Endothelial cell of umbilical vein (primary cell): ENCODE measurements at regions of chr11 and their contacts with region 1.

Region 1: DNA sequence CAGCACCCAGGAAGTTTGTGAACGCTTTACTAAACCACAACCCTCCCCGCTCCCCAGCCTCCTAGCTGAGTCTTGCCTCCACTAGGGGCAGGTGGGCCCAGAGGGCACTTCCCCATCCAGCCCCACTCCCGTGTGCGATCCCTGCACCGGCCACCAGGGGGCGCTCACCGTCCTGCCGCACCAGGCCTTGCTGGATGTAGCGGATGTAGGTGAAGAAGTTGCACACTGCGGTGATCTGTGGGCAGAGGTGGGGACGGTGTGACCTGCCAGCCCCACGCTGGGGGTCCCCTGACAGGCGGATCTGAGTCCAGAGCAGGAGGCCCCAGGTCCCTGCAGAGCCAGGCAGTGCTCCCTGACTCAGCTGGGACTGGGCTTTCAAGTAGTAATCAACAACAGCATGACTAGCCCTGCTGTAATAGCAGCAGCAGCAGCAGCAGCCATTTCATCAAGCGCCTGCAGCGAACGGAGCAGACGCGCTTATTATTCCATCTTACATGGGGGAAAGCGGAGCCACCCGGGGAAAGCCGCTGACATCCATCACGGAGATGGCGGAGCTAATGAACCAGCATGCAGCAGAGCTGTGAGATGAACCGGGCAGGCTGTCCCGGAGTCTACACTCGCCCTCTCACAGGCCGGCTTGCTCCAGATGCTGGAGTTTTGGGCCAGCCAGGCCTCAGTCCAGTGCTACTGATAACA is 7.9 kb upstream of the FADS3 start:
- DNase-seq: peak; percentile 80
- H3K4me3 ChIP-seq: no peak overlapping the region
- H3K27ac ChIP-seq: no peak overlapping the region
- H3K4me1 ChIP-seq: no peaks in the 10 kb centered on the region
- H3K27me3 ChIP-seq: no peaks in the 10 kb centered on the region
- CTCF ChIP-seq: peak; percentile 100
- POLR2A ChIP-seq: no peak

Region 2: DNA sequence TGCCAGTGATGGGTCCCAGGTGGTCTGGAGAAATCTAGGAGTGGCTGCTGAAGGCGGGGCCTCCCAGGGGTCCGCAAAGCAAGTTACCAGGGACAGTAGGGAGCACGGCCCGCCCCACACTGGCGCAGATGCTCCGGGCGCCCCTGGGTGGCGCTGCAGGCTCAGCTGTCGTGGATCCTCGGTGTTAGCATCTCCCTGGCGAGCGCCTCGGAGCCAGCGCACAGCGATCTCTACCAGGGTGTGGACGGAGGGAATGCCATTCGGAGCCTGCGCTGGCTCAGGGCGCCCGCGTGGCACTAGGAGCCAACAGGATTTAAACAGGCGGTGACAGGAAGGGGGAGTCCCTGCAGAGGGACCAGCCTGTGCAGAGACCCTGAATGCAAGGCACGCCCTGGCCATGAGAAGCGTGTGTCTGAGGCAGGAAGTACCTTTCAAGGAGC is 28.1 kb before region 1 on chr11:
- CTCF ChIA-PET with region 1: interaction called, 127 read pairs
- POLR2A ChIA-PET with region 1: no interaction called
- dilution Hi-C with region 1: no loop called
- intact Hi-C with region 1: loop called (anchors 1 kb)
- DNase-seq: peak; percentile 76
- H3K4me3 ChIP-seq: no peak overlapping the region
- H3K27ac ChIP-seq: no peak overlapping the region
- H3K4me1 ChIP-seq: peaks cover 12% of the 10 kb centered on the region
- H3K27me3 ChIP-seq: no peaks in the 10 kb centered on the region
- CTCF ChIP-seq: peak; percentile 95 to 99
- POLR2A ChIP-seq: no peak

Region 3: DNA sequence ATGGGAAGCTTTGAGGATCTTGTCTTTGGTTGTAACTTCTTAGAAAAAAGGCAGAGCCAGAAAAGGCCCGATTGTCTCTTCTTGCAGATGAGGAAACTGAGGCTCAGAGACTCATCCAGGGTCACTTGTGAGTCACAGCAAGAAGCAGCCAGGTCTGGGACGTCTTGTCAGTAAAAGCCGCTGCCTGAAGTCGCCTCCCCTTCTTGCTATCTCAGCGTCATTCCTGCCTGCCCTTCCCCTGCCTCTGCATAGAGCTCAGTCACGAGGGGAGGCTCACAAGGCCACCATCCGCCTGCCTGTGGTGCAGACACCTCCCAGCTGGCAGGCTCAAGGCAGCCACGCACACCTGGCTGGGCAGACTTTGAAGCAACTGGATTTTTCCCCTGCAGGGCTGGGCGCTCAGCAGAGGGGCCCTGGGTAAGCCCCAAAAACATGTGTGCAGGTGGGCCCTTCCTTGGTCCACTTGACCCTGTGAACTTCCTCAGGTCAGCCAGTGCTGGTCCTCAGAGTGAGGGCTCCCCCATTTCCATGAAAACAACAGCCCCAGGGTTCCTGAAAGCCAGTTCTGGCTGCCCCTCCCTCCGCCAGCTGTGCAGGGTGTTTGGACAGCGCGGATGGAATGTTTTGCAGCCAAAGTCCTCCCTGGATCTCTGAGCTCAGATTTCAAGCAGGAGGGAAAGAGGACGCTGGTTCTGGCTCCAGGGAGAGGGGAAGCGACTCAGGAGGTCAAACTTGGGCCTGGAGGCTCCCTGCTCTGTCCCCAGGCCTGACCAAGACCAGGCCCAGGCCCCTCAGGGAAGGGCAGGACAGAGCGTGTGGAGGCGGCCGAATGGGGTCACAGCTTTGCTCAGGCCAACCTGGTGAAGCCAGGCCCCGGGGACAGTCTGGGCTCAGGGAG is 24.1 kb after region 1 on chr11:
- CTCF ChIA-PET with region 1: interaction called, 18 read pairs
- POLR2A ChIA-PET with region 1: interaction called, 4 read pairs
- dilution Hi-C with region 1: no loop called
- intact Hi-C with region 1: no loop called
- DNase-seq: no peak
- H3K4me3 ChIP-seq: no peak overlapping the region
- H3K27ac ChIP-seq: no peak overlapping the region
- H3K4me1 ChIP-seq: no peaks in the 10 kb centered on the region
- H3K27me3 ChIP-seq: peaks cover 5 to 28% of the 10 kb centered on the region in 2 experiments
- CTCF ChIP-seq: no peak
- POLR2A ChIP-seq: no peak

Region 4: DNA sequence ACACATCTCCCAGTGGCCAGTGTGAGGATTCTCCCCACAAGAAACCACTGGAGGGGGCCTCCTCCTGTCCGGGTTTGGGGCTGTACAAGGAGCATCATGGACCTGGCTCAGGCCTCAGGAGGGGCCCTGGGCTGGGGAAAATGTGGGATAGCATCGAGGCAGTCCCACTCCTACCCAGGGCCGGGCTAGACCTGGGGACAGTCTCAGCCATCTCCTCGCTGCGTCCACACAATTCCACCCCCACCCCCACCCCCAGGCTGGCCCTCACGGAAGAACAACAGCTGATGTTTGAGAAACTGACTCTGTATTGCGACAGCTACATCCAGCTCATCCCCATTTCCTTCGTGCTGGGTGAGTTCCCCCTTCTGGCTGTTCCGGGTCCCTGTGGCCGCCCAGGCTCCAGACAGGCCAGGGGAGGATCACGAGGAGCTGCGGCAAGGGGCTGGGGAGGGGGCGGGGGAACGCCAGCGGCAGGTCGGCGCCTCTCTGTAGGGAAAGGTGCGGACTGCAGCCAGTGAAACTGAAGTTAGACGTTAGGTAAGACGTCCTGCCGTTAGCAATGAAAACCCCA is 55.6 kb after region 1 on chr11:
- CTCF ChIA-PET with region 1: interaction called, 276 read pairs
- POLR2A ChIA-PET with region 1: no interaction called
- dilution Hi-C with region 1: no loop called
- intact Hi-C with region 1: no loop called
- DNase-seq: no peak
- H3K4me3 ChIP-seq: no peak overlapping the region
- H3K27ac ChIP-seq: no peak overlapping the region
- H3K4me1 ChIP-seq: no peaks in the 10 kb centered on the region
- H3K27me3 ChIP-seq: peaks cover 5% of the 10 kb centered on the region in 2 experiments
- CTCF ChIP-seq: no peak
- POLR2A ChIP-seq: no peak

Region 5: DNA sequence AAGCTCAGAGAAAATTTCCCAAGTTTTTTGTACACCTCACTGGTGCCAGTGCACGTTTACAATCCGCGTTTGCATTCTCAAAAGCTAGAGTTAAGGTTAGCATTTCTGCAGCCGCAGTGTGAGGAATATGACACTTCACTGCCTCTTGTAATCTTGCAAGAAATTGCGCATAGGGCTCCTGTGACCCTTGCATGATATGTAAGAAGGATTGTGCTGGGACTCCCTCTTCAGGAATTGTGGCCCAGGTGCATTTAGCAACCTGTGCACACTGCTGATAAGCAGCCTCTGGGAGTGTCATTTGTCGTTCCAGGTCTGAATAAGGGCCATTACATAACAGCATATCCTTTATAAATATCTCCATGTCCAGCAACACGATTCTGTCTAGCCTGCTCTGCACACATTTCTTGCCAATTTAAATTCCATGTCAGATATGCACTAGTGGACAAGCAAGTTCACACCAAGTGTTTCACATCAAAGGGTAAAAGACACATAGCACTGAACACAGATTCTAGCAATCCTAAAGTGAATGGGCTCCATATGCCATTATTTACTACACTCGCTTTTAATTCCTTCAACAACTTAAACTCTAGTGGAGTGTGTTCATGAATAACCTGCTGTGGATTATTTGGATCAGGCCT is 155.3 kb after region 1 on chr11:
- CTCF ChIA-PET with region 1: interaction called, 7 read pairs
- POLR2A ChIA-PET with region 1: no interaction called
- dilution Hi-C with region 1: no loop called
- intact Hi-C with region 1: loop called (anchors 1 kb)
- DNase-seq: peak; percentile 38
- H3K4me3 ChIP-seq: no peak overlapping the region
- H3K27ac ChIP-seq: no peak overlapping the region
- H3K4me1 ChIP-seq: no peaks in the 10 kb centered on the region
- H3K27me3 ChIP-seq: peaks cover 14 to 17% of the 10 kb centered on the region in 2 experiments
- CTCF ChIP-seq: peak in 1 of 2 donors; percentile 14
- POLR2A ChIP-seq: no peak